ENCODE measurements at regions of chr19 and their contacts with region 1.

Region 1: GRCh38 chr19:3324321-3324856 is 42.0 kb upstream of the NFIC start:
- DNase-seq: peak; percentile 79
- ATAC-seq: peak; percentile 57 to 78
- H3K4me3 ChIP-seq: no peak overlapping the region
- H3K27ac ChIP-seq: no peak overlapping the region
- H3K4me1 ChIP-seq: no peaks in the 10 kb centered on the region
- H3K27me3 ChIP-seq: peaks cover 20% of the 10 kb centered on the region
- CTCF ChIP-seq: peak; percentile 81

Region 2: GRCh38 chr19:3243819-3244700 is 80.3 kb before region 1 on chr19:
- intact Hi-C with region 1: no loop called
- DNase-seq: no peak
- ATAC-seq: peak in 1 of 2 donors; percentile 31
- H3K4me3 ChIP-seq: no peak overlapping the region
- H3K27ac ChIP-seq: no peak overlapping the region
- H3K4me1 ChIP-seq: no peaks in the 10 kb centered on the region
- H3K27me3 ChIP-seq: peaks cover 5% of the 10 kb centered on the region
- CTCF ChIP-seq: no peak

Region 3: GRCh38 chr19:3471954-3472655 is 147.7 kb after region 1 on chr19:
- intact Hi-C with region 1: loop called (anchors 10 kb)
- DNase-seq: no peak
- ATAC-seq: peak; percentile 71
- H3K4me3 ChIP-seq: no peak overlapping the region
- H3K27ac ChIP-seq: no peak overlapping the region
- H3K4me1 ChIP-seq: peaks cover 14% of the 10 kb centered on the region
- H3K27me3 ChIP-seq: no peaks in the 10 kb centered on the region
- CTCF ChIP-seq: peak; percentile 88

Region 4: DNA sequence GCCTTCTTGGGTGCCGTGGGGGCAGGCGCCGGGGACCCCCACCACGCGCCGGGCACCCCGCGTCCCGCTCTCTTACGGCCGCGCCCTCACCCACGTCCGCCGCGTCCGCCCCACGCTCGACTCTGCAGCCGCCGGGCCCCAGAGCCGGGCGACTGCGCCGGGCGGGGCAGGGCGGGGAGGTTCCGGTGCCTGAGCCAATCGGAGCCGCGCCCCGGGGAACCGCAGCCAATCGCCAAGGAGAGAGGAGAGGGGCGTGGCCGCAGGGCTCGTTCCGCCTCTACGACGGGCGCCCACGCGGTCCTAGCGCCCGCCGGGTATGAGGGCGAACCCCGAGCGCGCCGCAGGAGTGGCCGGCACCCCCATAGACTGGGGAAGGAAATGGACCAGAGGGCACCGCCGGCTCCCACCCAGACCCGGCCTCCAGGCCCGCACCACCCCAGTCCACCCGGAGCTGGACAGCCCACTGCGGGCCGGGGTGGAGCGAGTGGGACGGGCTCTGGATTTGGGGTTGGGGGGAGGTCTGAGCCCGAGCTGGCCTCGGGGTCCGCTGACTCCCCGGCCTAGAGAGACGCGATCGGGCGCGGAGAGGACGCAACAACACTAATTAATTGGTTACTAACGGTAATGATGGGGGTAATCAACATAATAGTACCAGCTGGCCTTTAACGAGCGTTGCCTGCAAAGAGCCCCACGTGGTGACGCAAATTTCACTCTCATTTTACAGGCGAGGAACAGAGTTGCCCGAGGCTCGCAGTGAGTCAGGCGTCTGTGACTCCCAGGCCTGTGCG is 233.3 kb after region 1 on chr19 and contains the start of gene MFSD12:
- intact Hi-C with region 1: no loop called
- DNase-seq: peak; percentile 96
- ATAC-seq: peak; percentile 98 to 99
- H3K4me3 ChIP-seq: peak within 1 kb of the TSS; percentile 95
- H3K27ac ChIP-seq: peak within 1 kb of the TSS; percentile 87
- H3K4me1 ChIP-seq: peaks cover 43% of the 10 kb centered on the region
- H3K27me3 ChIP-seq: no peaks in the 10 kb centered on the region
- CTCF ChIP-seq: no peak
- total RNA-seq, gene MFSD12: 80.7 TPM

Measured in lower lobe of right lung (tissue), 2 donors.